Naive thymus-derived CD8-positive, alpha-beta T cell (primary cell): ENCODE measurements at regions of chr6 and their contacts with region 1.

Region 1: GRCh38 chr6:24899997-24900325 is 35.8 kb downstream of the RIPOR2 start:
- DNase-seq: peak in 7 of 10 donors; percentile 15 to 76 (median 56)
- ATAC-seq: peak; percentile 60 to 87
- H3K4me3 Mint-ChIP-seq: peak overlapping the region; percentile 29 to 76 (median 70)
- H3K27ac Mint-ChIP-seq: peak overlapping the region; percentile 87 to 99 (median 95)
- H3K4me1 Mint-ChIP-seq: peaks cover 49 to 96% (median 92%) of the 10 kb centered on the region in 4 donors
- H3K27me3 Mint-ChIP-seq: no peaks in the 10 kb centered on the region

Region 2: GRCh38 chr6:24883618-24884017 is 16.3 kb before region 1 on chr6:
- POLR2A ChIA-PET with region 1: interaction called, 13 read pairs
- DNase-seq: no peak
- ATAC-seq: peak in 1 of 2 donors; percentile 41
- H3K4me3 Mint-ChIP-seq: peak overlapping the region; percentile 1 to 74 (median 62)
- H3K27ac Mint-ChIP-seq: peak overlapping the region; percentile 68 to 96 (median 87)
- H3K4me1 Mint-ChIP-seq: peaks cover 45 to 92% (median 92%) of the 10 kb centered on the region in 4 donors
- H3K27me3 Mint-ChIP-seq: no peaks in the 10 kb centered on the region

Region 3: GRCh38 chr6:24888715-24889370 is 11.1 kb before region 1 on chr6:
- POLR2A ChIA-PET with region 1: interaction called, 13 read pairs
- DNase-seq: no peak
- ATAC-seq: peak; percentile 41 to 64
- H3K4me3 Mint-ChIP-seq: peak overlapping the region in 8 of 10 donors; percentile 20 to 75 (median 48)
- H3K27ac Mint-ChIP-seq: peak overlapping the region; percentile 30 to 96 (median 85)
- H3K4me1 Mint-ChIP-seq: peaks cover 34 to 93% (median 89%) of the 10 kb centered on the region in 4 donors
- H3K27me3 Mint-ChIP-seq: no peaks in the 10 kb centered on the region

Region 4: GRCh38 chr6:24910961-24911712 is 11.2 kb after region 1 on chr6:
- POLR2A ChIA-PET with region 1: interaction called, 62 read pairs
- DNase-seq: peak in 5 of 10 donors; percentile 39 to 70 (median 56)
- ATAC-seq: peak; percentile 39 to 45
- H3K4me3 Mint-ChIP-seq: peak overlapping the region; percentile 81 to 99 (median 94)
- H3K27ac Mint-ChIP-seq: peak overlapping the region; percentile 96 to 99 (median 98)
- H3K4me1 Mint-ChIP-seq: peaks cover 75 to 100% (median 98%) of the 10 kb centered on the region in 4 donors
- H3K27me3 Mint-ChIP-seq: no peaks in the 10 kb centered on the region

Region 5: GRCh38 chr6:24919004-24919892 is 19.3 kb after region 1 on chr6:
- POLR2A ChIA-PET with region 1: interaction called, 23 read pairs
- DNase-seq: no peak
- ATAC-seq: peak; percentile 33 to 47
- H3K4me3 Mint-ChIP-seq: peak overlapping the region; percentile 66 to 91 (median 80)
- H3K27ac Mint-ChIP-seq: peak overlapping the region; percentile 84 to 99 (median 92)
- H3K4me1 Mint-ChIP-seq: peaks cover 56 to 96% (median 92%) of the 10 kb centered on the region in 4 donors
- H3K27me3 Mint-ChIP-seq: no peaks in the 10 kb centered on the region